Right ventricle myocardium inferior (tissue), 1 donor: ENCODE measurements at regions of chr2 and their contacts with region 1.

Region 1: GRCh38 chr2:96856776-96857673 is 791 bp downstream of the ANKRD39 start:
- DNase-seq: no peak
- ATAC-seq: no peak

Region 2: DNA sequence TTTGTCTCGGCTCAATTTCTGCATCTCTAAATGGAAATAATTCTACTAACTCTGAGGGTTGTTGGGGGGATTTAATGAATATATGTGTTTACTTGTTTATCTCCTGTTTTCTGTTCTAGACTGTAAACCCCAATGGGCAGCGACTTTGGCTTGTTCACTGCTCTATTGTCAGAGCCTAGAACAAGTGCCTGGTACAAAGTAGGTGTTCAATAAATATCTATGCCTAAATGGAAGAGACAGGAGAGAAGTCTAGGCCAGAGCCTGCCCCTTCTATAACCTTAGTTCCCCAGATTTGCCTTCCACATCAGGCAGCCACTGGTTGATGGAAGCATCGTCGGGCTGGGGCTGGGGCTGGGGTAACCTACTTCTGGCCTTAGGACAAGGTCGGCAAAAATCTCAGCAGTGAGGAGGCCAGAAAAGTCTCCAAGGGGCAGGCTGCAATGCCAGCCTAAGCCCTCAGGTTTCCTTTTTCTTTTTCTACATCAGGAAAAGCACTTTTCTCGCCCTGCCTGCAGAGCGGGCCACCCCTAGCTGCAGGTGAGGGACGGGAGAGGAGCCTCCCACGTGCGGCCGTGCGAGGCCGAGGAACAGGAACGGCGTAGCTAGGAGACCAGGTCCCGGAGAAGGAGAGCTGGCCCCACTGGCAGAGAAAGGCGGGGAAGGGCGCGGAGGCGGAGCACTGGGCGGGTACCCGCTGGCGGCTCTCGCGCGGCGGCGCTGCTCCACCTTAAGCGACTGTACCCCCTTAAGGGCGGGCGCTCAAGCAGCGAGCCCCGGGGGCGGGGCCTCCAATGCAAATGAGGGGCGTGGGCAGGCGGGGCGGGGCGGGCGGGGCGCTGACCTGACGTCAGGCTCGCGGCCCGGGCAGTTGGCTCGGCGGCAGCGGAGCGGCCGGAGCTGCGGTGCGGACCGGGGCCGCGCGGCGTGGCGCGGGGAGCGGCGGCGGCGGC is 96.7 kb before region 1 on chr2 and contains the start of gene CNNM4:
- intact Hi-C with region 1: loop called (anchors 5 kb)
- DNase-seq: peak; percentile 98
- ATAC-seq: peak; percentile 97
- total RNA-seq, gene CNNM4: 33.3 TPM

Region 3: GRCh38 chr2:96788442-96789244 is 68.4 kb before region 1 on chr2:
- intact Hi-C with region 1: no loop called
- DNase-seq: peak; percentile 65
- ATAC-seq: peak; percentile 83

Region 4: DNA sequence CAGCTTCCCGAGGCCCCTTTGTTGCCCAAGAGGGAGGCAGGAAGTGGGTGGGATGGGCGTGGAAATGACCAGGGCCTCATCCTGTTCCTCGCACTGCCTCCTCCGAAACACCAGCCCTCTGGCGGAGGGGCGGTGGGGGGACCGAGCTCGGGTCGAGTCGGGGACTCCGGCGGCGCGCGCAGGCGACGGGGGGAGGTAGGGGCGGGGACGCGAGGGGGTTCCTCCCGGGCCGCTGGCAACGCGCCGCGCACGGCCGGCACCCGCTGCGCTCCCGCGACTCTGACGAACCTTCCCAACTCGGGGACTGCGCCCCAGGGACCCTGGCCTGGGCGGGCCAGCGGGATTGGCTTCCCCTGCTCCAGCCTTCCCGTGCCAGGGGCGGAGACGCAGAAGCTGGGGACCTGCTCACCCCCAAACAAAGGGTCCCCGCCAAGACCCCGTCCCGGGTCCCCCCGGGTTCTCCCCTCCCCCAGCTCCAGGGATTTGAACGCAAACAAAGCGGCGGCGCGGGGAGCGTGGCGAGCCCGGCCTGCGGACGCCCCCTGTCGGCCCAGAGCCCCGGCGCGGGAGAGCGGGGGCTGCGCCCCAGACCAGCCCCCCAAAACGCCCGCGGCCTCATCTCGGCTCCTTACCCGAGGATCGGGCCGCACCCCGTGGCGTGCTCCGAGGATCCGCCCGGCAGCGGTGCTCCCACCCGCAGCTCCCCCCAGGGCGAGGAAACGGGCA is 11.7 kb after region 1 on chr2:
- intact Hi-C with region 1: loop called (anchors 1 kb)
- DNase-seq: peak; percentile 93
- ATAC-seq: peak; percentile 73

Region 5: GRCh38 chr2:96951093-96951654 is 94.1 kb after region 1 on chr2:
- intact Hi-C with region 1: loop called (anchors 1 kb)
- DNase-seq: peak; percentile 80
- ATAC-seq: peak; percentile 78

Region 6: GRCh38 chr2:96960153-96960961 is 103.3 kb after region 1 on chr2:
- intact Hi-C with region 1: loop called (anchors 1 kb)
- DNase-seq: peak; percentile 92
- ATAC-seq: peak; percentile 97